BJ (cell line): ENCODE measurements at regions of chr1 and their contacts with region 1.

Region 1: DNA sequence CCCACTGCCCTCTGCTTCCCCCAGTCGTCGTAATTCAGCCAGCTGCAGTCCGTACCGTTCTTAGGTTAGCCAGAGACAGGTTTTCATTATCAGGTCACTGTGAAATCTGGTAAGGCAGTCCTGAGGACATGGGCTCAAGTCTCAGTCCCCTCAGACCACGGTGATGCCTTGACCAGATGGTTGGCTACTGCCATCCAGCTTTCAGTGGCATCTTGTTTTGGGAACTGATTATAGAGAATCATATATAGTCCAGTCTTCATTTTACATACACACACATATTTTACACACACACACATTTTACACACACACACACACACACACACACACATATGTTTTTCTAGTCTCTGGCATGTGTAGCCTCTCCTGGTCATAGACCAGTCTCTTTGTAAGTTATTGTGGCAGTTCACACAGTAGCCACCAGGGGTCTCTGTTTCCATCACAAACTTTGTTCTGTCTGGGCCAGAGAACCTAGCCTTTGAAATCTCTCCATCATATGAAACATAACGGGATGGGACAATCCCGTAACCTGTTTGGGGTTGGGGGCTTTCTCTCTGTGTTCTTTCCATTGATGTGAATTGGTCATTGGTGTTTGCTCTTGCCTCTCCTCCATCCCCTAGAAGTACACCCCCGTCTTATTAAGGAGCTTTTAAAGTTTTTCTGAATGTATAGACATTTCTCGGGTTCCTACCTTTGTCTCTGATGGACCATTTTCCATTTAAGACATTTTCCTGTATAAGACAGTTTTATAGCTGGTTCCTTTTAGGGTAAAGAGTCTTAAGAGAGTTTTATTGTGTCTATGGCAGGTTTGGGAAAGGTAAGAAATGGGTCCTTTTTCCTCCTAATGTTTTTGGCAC is 8.4 kb upstream of the IKBKE start:
- DNase-seq: no peak
- H3K4me3 ChIP-seq: no peak overlapping the region
- H3K27me3 ChIP-seq: no peaks in the 10 kb centered on the region
- CTCF ChIP-seq: peak; percentile 84

Region 2: GRCh38 chr1:206449622-206450021 is 12.2 kb before region 1 on chr1:
- CTCF ChIA-PET with region 1: interaction called, 11 read pairs
- POLR2A ChIA-PET with region 1: no interaction called
- DNase-seq: no peak
- H3K4me3 ChIP-seq: no peak overlapping the region
- H3K27me3 ChIP-seq: no peaks in the 10 kb centered on the region
- CTCF ChIP-seq: no peak